ENCODE measurements at regions of chr11 and their contacts with region 1.

Region 1: GRCh38 chr11:110092515-110093404 is at the start of gene ZC3H12C:
- DNase-seq: peak; percentile 88
- H3K4me3 Mint-ChIP-seq: peak within 1 kb of the TSS; percentile 87
- H3K27ac Mint-ChIP-seq: peak within 1 kb of the TSS; percentile 95
- H3K4me1 Mint-ChIP-seq: peaks cover 11% of the 10 kb centered on the region
- H3K27me3 Mint-ChIP-seq: no peaks in the 10 kb centered on the region
- CTCF ChIP-seq: peak; percentile 19
- total RNA-seq, gene ZC3H12C: 11.1 and 14.1 TPM in 2 replicates

Region 2: GRCh38 chr11:109946322-109946846 is 146.4 kb before region 1 on chr11:
- CTCF ChIA-PET with region 1: no interaction called
- intact Hi-C with region 1: loop called (anchors 2 kb)
- DNase-seq: peak; percentile 76
- H3K4me3 Mint-ChIP-seq: peak overlapping the region; percentile 35
- H3K27ac Mint-ChIP-seq: peak overlapping the region; percentile 19
- H3K4me1 Mint-ChIP-seq: peaks cover 10% of the 10 kb centered on the region
- H3K27me3 Mint-ChIP-seq: no peaks in the 10 kb centered on the region
- CTCF ChIP-seq: peak; percentile 44

Region 3: DNA sequence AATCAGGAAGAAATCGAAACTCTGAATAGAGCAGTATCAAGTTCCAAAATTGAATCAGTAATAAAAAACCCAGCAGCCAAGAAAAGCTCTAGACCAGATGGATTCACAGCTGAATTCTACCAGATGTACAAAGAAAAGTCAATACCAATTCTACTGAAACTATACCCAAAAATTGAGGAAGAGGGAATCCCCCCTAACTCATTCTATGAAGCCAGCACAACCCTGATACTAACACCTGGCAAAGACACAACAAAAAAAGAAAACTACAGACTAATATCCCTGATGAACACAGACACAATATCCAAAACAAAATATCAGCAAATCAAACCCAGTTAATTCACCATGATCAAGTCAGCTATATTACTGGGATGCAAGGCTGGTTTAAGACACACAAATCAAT is 98.1 kb after region 1 on chr11:
- CTCF ChIA-PET with region 1: no interaction called
- intact Hi-C with region 1: loop called (anchors 5 kb)
- DNase-seq: no peak
- H3K4me3 Mint-ChIP-seq: no peak overlapping the region
- H3K27ac Mint-ChIP-seq: no peak overlapping the region
- H3K4me1 Mint-ChIP-seq: peaks cover 20% of the 10 kb centered on the region
- H3K27me3 Mint-ChIP-seq: no peaks in the 10 kb centered on the region
- CTCF ChIP-seq: no peak

Region 4: DNA sequence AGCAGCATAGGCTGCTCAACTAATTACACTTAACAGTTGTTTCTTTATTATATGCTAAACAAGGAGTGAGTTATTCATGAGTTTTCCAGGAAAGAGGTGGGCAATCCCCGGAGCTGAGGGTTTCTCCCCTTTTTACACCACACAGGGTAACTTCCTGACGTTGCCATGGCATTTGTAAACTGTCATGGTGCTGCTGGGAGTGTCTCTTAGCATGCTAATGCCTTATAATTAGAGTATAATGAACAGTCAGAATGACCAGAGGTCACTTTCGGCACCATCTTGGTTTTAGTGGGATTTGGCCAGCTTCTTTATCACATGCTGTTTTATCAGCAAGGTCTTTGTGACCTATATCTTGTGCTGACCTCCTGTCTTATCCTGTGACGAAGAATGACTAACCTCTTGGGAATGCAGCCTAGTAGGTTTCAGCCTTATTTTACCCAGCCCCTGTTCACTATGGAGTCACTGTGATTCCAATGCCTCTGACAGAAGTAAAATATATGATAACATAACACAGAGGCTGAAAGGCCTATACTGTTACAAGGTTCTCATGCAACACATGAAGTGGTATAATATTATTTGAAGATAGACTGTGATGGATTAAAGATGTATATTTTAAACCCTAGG is 244.9 kb after region 1 on chr11:
- CTCF ChIA-PET with region 1: no interaction called
- intact Hi-C with region 1: no loop called
- DNase-seq: peak; percentile 49
- H3K4me3 Mint-ChIP-seq: no peak overlapping the region
- H3K27ac Mint-ChIP-seq: peak overlapping the region; percentile 60
- H3K4me1 Mint-ChIP-seq: peaks cover 26% of the 10 kb centered on the region
- H3K27me3 Mint-ChIP-seq: no peaks in the 10 kb centered on the region
- CTCF ChIP-seq: no peak

Region 5: DNA sequence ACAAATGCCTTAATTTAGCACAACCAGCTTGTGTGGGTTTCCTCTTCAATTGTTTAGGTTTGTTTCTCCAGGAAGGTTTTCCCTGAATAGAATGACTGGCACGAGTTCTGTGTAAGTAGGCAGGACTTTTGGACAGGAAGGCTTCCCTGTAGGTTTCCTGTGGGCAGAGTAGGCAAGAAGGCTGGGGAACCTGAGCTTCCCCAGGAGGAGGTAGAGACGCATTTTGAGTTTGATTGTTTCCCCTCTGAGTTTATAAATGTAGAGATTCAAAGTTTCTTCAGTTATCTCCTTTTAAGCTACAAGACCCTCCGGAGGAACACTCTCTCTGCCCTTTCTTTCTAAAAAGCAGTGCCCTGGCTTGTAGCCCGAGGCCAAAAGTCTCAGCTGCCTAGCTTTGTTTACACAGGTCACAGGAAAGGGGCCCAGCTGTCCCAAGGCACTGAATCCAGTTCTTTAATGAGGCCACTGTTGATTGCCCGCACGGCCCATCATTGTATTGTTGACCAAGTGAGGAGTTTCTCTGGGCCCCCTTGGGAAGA is 270.3 kb after region 1 on chr11:
- CTCF ChIA-PET with region 1: no interaction called
- intact Hi-C with region 1: loop called (anchors 10 kb)
- DNase-seq: peak; percentile 11
- H3K4me3 Mint-ChIP-seq: no peak overlapping the region
- H3K27ac Mint-ChIP-seq: peak overlapping the region; percentile 67
- H3K4me1 Mint-ChIP-seq: peaks cover 19% of the 10 kb centered on the region
- H3K27me3 Mint-ChIP-seq: no peaks in the 10 kb centered on the region
- CTCF ChIP-seq: no peak

Measured in Calu3 (cell line).